ENCODE measurements at regions of chr6 and their contacts with region 1.

Region 1: DNA sequence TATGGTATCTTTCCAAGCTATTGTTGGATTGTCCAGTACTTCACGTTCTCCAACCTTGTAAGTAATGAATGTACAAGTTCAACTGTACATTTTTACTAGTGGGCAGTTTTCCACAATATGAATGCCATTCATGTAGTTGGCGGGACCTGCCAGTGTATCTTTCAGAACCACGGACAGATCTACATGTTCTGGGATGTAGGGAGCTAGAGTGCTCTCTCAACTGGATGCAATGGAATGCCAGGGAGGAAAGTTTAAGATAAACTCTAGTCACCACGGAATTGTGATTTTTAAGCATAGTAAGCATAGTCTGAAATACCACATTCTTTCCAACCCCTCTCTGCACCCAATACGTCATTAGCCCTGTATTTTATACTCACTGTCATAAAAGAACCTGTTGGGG is 21.5 kb upstream of the HLA-C start:
- DNase-seq: no peak
- ATAC-seq: no peak
- H3K4me3 ChIP-seq: no peak overlapping the region
- H3K27ac ChIP-seq: no peak overlapping the region
- H3K4me1 ChIP-seq: no peaks in the 10 kb centered on the region
- H3K27me3 ChIP-seq: peaks cover 0 to 1% of the 10 kb centered on the region in 2 experiments; a peak in 2 of 5 replicates
- CTCF ChIP-seq: no peak
- EP300 ChIP-seq: no peak
- POLR2A ChIP-seq: no peak
- RAD21 ChIP-seq: no peak

Region 2: GRCh38 chr6:31308050-31308844 is 14.9 kb after region 1 on chr6:
- CTCF ChIA-PET with region 1: no interaction called
- POLR2A ChIA-PET with region 1: interaction called, 15 read pairs
- in situ Hi-C with region 1: no loop called
- intact Hi-C with region 1: no loop called
- DNase-seq: peak; percentile 52 to 80 (median 73)
- ATAC-seq: peak; percentile 92
- H3K4me3 ChIP-seq: no peak overlapping the region
- H3K27ac ChIP-seq: no peak overlapping the region
- H3K4me1 ChIP-seq: peaks cover 8 to 15% of the 10 kb centered on the region in 2 experiments; a peak in 4 of 5 replicates
- H3K27me3 ChIP-seq: peaks cover 17 to 42% of the 10 kb centered on the region in 2 experiments; a peak in 4 of 5 replicates
- CTCF ChIP-seq: no peak
- EP300 ChIP-seq: no peak
- POLR2A ChIP-seq: no peak
- RAD21 ChIP-seq: no peak

Region 3: GRCh38 chr6:31426395-31427354 is 133.3 kb after region 1 on chr6:
- CTCF ChIA-PET with region 1: no interaction called
- POLR2A ChIA-PET with region 1: no interaction called
- in situ Hi-C with region 1: no loop called
- intact Hi-C with region 1: no loop called
- DNase-seq: no peak
- ATAC-seq: no peak
- H3K4me3 ChIP-seq: no peak overlapping the region
- H3K27ac ChIP-seq: no peak overlapping the region
- H3K4me1 ChIP-seq: no peaks in the 10 kb centered on the region
- H3K27me3 ChIP-seq: peaks cover 0 to 13% of the 10 kb centered on the region in 2 experiments; a peak in 2 of 5 replicates
- CTCF ChIP-seq: no peak
- EP300 ChIP-seq: no peak
- POLR2A ChIP-seq: no peak
- RAD21 ChIP-seq: no peak